ENCODE measurements at regions of chr11 and their contacts with region 1.

Region 1: GRCh38 chr11:11028017-11028692 is 170.3 kb upstream of the ZBED5 start:
- DNase-seq: no peak
- H3K4me3 ChIP-seq: no peak overlapping the region
- CTCF ChIP-seq: peak; percentile 68

Region 2: GRCh38 chr11:10933455-10934292 is 94.5 kb before region 1 on chr11:
- CTCF ChIA-PET with region 1: interaction called, 152 read pairs
- POLR2A ChIA-PET with region 1: interaction called, 4 read pairs
- DNase-seq: peak; percentile 73
- H3K4me3 ChIP-seq: peak overlapping the region; percentile 58
- CTCF ChIP-seq: peak; percentile 90

Region 3: GRCh38 chr11:10982704-10983510 is 45.2 kb before region 1 on chr11:
- CTCF ChIA-PET with region 1: no interaction called
- POLR2A ChIA-PET with region 1: no interaction called
- DNase-seq: no peak
- H3K4me3 ChIP-seq: no peak overlapping the region
- CTCF ChIP-seq: no peak

Region 4: DNA sequence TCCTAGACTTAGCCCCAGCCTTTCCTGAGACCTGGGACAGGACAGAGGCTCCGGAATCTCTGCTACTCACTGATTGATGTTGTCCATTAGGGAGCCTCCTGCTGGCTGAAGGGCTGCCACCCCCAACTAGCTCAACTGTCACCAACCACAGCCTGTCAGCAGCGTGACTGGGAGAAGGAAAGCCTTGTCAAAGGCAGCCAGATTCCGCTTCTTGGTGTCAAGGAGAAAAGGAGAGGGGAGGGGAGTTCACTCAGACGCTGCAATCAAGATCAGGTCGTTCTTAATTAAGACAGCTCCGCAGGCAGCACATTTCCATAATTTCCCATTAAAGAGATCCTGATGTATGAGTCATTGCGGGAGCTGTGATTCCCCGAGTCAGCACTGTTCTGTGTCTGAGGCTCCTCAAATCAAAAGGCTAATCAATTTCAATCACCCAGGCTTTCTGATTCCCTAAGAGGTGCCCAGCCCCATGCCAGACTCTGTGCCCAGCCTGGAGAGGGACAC is 17.5 kb before region 1 on chr11:
- CTCF ChIA-PET with region 1: interaction called, 22 read pairs
- POLR2A ChIA-PET with region 1: no interaction called
- DNase-seq: no peak
- H3K4me3 ChIP-seq: no peak overlapping the region
- CTCF ChIP-seq: peak; percentile 42

Region 5: GRCh38 chr11:11148104-11148509 is 120.0 kb after region 1 on chr11:
- CTCF ChIA-PET with region 1: interaction called, 14 read pairs
- POLR2A ChIA-PET with region 1: no interaction called
- DNase-seq: peak; percentile 79
- H3K4me3 ChIP-seq: no peak overlapping the region
- CTCF ChIP-seq: peak; percentile 49

Region 6: DNA sequence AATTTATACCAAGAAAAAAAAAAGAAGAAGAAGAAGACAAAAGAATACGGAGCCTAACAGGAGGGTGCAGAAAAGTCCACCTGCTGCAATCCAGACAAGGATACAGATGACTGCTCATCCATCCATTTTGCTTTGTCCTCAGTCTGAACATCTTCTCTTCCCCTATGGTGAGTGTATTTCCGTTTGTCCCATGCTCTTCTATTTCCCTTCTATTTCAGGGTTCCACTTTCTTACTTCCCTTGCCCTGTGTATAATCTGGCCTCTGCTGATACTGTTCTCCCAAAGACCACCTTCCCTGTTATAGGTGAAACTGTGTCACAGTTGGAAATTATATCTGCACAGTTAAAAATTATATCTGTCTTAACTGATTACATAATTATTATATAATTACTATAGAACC is 764.9 kb after region 1 on chr11:
- CTCF ChIA-PET with region 1: interaction called, 189 read pairs
- POLR2A ChIA-PET with region 1: no interaction called
- DNase-seq: no peak
- H3K4me3 ChIP-seq: no peak overlapping the region
- CTCF ChIP-seq: no peak

Measured in AG04449 (cell line).